Vagina (tissue), 2 donors: ENCODE measurements at regions of chr11 and their contacts with region 1.

Region 1: GRCh38 chr11:124953753-124954589 is at the start of gene CCDC15:
- DNase-seq: peak; percentile 98
- H3K4me3 ChIP-seq: peak within 1 kb of the TSS; percentile 54 to 55
- H3K27ac ChIP-seq: peak within 1 kb of the TSS; percentile 75
- H3K4me1 ChIP-seq: peaks cover 7% of the 10 kb centered on the region
- H3K27me3 ChIP-seq: no peaks in the 10 kb centered on the region
- CTCF ChIP-seq: no peak
- POLR2A ChIP-seq: peak; percentile 20 to 79
- total RNA-seq, gene CCDC15: 2.9 TPM

Region 2: DNA sequence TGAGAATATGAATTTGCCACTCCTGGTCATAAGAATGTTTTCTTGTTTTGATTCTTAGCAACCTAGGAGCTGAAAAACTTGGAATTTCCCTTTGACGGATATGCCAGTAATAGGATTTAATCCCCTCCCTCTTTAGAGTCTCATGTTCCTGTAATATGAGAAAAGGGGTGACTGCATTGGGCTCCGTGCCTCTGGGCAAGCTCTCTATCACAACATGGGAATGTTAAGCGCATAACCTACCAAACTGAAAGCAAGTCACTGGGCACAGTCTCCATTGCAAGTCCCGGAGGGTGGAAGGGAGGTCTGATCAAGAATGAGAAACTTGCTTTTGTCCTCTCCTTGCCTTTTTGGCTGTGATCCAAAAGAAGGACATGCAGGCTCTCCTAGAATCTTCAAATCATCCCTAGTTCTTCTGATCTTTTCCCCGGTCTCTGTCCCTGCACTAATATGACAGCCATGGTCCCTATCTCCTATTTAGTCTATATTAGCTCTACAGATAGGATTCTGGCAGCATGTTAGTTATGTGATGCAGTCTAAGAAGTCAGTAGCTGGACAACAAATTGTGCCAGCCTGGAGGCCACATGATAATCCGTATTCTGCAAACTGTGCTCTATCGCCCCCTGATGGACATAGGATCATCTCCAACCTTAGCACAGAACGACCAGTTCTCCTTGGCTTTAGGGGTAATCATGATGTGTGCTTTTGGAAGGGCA is 759.1 kb before region 1 on chr11:
- intact Hi-C with region 1: no loop called
- DNase-seq: no peak
- H3K4me3 ChIP-seq: no peak overlapping the region
- H3K27ac ChIP-seq: no peak overlapping the region
- H3K4me1 ChIP-seq: no peaks in the 10 kb centered on the region
- H3K27me3 ChIP-seq: no peaks in the 10 kb centered on the region
- CTCF ChIP-seq: peak in 2 of 3 experiments; percentile 12 to 25
- POLR2A ChIP-seq: no peak

Region 3: DNA sequence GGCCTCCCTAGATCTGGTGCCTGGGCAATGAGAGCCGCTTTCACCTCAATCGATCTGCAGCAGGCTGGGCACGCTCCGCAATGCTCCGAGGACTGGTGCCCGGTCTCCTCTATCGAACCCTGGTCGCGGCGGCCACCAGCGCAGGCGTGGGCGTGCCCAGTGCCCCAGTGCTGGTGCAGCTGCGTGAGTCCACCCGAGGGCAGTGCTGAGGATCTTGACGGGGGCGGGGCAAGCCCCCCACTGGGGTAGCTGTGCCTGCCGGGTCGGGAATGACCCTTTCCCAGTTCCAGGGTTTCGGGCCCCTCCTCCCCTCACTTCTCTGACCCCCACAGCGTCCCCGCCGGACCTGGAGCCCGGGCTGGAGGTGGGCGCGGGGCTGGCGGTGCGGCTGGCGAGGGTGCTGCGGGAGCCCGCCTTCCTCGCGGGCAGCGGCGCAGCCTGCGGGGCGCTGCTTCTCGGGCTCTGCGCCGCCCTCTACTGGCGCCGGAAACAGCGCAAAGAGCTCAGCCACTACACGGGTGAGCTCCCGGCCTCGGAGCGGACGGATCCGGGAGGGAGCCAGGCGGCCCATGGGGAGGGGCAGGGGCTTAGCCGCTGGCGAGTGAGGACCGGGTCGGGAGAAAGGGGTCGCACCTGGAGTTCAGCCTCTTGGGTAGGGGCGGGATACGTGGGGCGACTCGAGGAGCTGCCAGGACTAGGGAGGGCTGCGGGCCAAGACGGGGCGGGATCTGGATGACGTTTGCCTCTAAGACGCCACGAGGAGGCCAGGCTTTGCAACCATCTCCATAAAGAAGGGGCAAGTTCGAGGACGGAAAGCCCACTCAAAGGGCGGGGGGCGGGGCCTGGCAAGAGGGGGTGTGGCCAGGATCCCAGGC is 77.8 kb before region 1 on chr11:
- intact Hi-C with region 1: loop called (anchors 5 kb)
- DNase-seq: no peak
- H3K4me3 ChIP-seq: peak overlapping the region; percentile 55 to 68
- H3K27ac ChIP-seq: peak overlapping the region; percentile 72
- H3K4me1 ChIP-seq: peaks cover 21% of the 10 kb centered on the region
- H3K27me3 ChIP-seq: no peaks in the 10 kb centered on the region
- CTCF ChIP-seq: peak; percentile 47 to 88 (median 58)
- POLR2A ChIP-seq: peak in 1 of 2 donors; percentile 7

Region 4: GRCh38 chr11:124891373-124891861 is 62.6 kb before region 1 on chr11:
- intact Hi-C with region 1: no loop called
- DNase-seq: peak in 1 of 2 donors; percentile 87
- H3K4me3 ChIP-seq: no peak overlapping the region
- H3K27ac ChIP-seq: no peak overlapping the region
- H3K4me1 ChIP-seq: no peaks in the 10 kb centered on the region
- H3K27me3 ChIP-seq: no peaks in the 10 kb centered on the region
- CTCF ChIP-seq: no peak
- POLR2A ChIP-seq: no peak